ENCODE measurements at regions of chr9 and their contacts with region 1.

Region 1: DNA sequence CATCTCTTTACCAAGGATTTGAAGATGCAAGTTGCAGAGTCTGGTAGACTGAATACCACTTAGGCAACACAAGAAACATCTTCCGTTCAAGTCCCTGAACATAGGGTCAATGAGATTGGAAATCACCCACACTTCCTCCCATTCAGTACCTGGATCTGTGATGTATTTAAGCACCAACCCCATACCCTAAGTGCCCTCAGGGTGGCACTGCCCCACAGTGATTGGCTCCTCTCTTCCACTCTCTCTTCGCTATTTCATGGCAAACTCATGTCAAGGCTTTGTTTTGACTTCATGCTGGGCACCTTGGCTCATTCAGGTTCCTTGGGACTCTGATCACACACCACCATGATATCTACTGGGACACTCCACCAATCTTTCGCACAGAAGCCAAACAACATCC is 53.7 kb downstream of the GGTA1 start:
- DNase-seq: peak in 1 of 2 experiments; percentile 27
- H3K4me3 ChIP-seq: no peak overlapping the region
- H3K27ac ChIP-seq: no peak overlapping the region
- H3K4me1 ChIP-seq: no peaks in the 10 kb centered on the region
- H3K27me3 ChIP-seq: peaks cover 85% of the 10 kb centered on the region
- CTCF ChIP-seq: peak; percentile 36

Region 2: GRCh38 chr9:120856700-120857099 is 589.3 kb before region 1 on chr9:
- CTCF ChIA-PET with region 1: no interaction called
- POLR2A ChIA-PET with region 1: no interaction called
- intact Hi-C with region 1: no loop called
- DNase-seq: no peak
- H3K4me3 ChIP-seq: no peak overlapping the region
- H3K27ac ChIP-seq: no peak overlapping the region
- H3K4me1 ChIP-seq: no peaks in the 10 kb centered on the region
- H3K27me3 ChIP-seq: no peaks in the 10 kb centered on the region
- CTCF ChIP-seq: no peak

Region 3: GRCh38 chr9:121107041-121107440 is 338.9 kb before region 1 on chr9:
- CTCF ChIA-PET with region 1: no interaction called
- POLR2A ChIA-PET with region 1: interaction called, 11 read pairs
- intact Hi-C with region 1: no loop called
- DNase-seq: no peak
- H3K4me3 ChIP-seq: no peak overlapping the region
- H3K27ac ChIP-seq: no peak overlapping the region
- H3K4me1 ChIP-seq: no peaks in the 10 kb centered on the region
- H3K27me3 ChIP-seq: no peaks in the 10 kb centered on the region
- CTCF ChIP-seq: 0 out of 2 replicates have a peak, but pooled peaks have one; percentile 25

Region 4: DNA sequence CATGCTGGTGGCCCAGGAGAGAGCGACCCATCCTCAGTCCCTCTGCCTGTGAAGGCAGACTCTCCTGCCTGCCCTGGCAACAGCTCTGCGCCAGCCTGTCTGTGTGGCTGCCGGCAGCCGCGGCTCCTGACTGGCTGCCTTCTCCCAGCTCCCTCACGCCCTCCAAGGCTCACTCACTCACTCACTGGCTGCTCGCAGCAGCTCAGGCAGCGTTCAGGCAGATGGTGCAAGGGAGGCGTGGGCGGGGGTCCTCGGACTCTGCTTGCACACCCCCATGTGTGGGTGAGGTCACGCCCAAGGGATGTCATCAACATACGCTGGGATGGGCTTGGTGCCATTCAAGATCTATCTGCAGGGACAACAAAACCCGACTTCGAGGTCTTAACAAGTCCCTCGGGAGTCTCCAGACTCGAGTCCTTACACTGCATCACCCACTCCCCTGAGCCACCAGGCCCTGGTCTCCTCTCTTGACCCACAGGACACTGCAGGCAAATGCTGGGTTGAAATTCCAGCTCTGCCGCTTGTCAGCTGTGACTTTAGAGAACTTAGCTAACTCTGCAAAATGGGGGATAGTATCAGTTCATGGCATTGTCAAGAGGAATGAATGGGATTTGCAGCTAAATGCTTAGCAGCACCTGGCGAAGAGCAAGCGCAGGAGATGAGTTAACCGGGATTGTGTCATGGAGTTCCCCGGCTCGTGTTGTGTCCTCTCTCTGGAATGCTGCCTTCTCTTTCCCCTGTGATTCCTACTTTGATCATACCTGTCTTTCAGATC is 272.3 kb after region 1 on chr9:
- CTCF ChIA-PET with region 1: no interaction called
- POLR2A ChIA-PET with region 1: no interaction called
- intact Hi-C with region 1: no loop called
- DNase-seq: no peak
- H3K4me3 ChIP-seq: no peak overlapping the region
- H3K27ac ChIP-seq: no peak overlapping the region
- H3K4me1 ChIP-seq: peaks cover 22% of the 10 kb centered on the region
- H3K27me3 ChIP-seq: no peaks in the 10 kb centered on the region
- CTCF ChIP-seq: no peak

Measured in PC-9 (cell line).